Heart left ventricle (tissue), 16 donors: ENCODE measurements at regions of chr11 and their contacts with region 1.

Region 1: GRCh38 chr11:44611687-44612434 is 46.4 kb downstream of the CD82 start:
- DNase-seq: peak in 2 of 5 donors; percentile 40 to 46
- ATAC-seq: peak in 3 of 4 donors; percentile 33 to 65 (median 38)
- H3K4me3 ChIP-seq: no peak overlapping the region
- H3K27ac ChIP-seq: peak overlapping the region in 10 of 12 donors; percentile 12 to 71 (median 37)
- H3K4me1 ChIP-seq: peaks cover 0 to 64% (median 32%) of the 10 kb centered on the region in 12 donors
- H3K27me3 ChIP-seq: no peaks in the 10 kb centered on the region
- CTCF ChIP-seq: no peak
- POLR2A ChIP-seq: no peak

Region 2: GRCh38 chr11:44095506-44096394 is 516.1 kb before region 1 on chr11 and contains the start of gene EXT2:
- intact Hi-C with region 1: loop called in 1 of 10 experiments (anchors 10 kb)
- DNase-seq: peak; percentile 88 to 96 (median 92)
- ATAC-seq: peak; percentile 94 to 98 (median 97)
- H3K4me3 ChIP-seq: peak within 1 kb of the TSS; percentile 70 to 99 (median 90)
- H3K27ac ChIP-seq: peak within 1 kb of the TSS; percentile 62 to 95 (median 84)
- H3K4me1 ChIP-seq: peaks cover 0 to 29% (median 22%) of the 10 kb centered on the region in 12 donors
- H3K27me3 ChIP-seq: no peaks in the 10 kb centered on the region
- CTCF ChIP-seq: peak; percentile 78 to 96 (median 92)
- POLR2A ChIP-seq: peak in 1 of 2 donors; percentile 66
- total RNA-seq, gene EXT2: 24.3 to 41.9 (median 31.9) TPM

Region 3: GRCh38 chr11:44309483-44310205 is 302.2 kb before region 1 on chr11 and contains the start of gene ALX4:
- intact Hi-C with region 1: loop called in 1 of 10 experiments (anchors 10 kb)
- DNase-seq: peak in 3 of 5 donors; percentile 27 to 62 (median 54)
- ATAC-seq: peak; percentile 51 to 74 (median 70)
- H3K4me3 ChIP-seq: peak within 1 kb of the TSS; percentile 29 to 62 (median 46)
- H3K27ac ChIP-seq: no peak within 1 kb of the TSS
- H3K4me1 ChIP-seq: peaks cover 2 to 43% (median 23%) of the 10 kb centered on the region in 12 donors
- H3K27me3 ChIP-seq: peaks cover 55 to 100% (median 97%) of the 10 kb centered on the region in 9 donors
- CTCF ChIP-seq: peak in 2 of 12 donors; percentile 10 to 14
- POLR2A ChIP-seq: no peak
- total RNA-seq, gene ALX4: 0.05 to 0.24 (median 0.11) TPM in 7 of 9 donors, not detected in the others

Region 4: GRCh38 chr11:44556735-44557409 is 55.0 kb before region 1 on chr11:
- intact Hi-C with region 1: loop called (anchors 1 kb)
- DNase-seq: peak in 4 of 5 donors; percentile 57 to 81 (median 66)
- ATAC-seq: peak; percentile 65 to 85 (median 78)
- H3K4me3 ChIP-seq: no peak overlapping the region
- H3K27ac ChIP-seq: peak overlapping the region in 1 of 12 donors; percentile 13
- H3K4me1 ChIP-seq: peaks cover 0 to 28% (median 5%) of the 10 kb centered on the region in 12 donors
- H3K27me3 ChIP-seq: no peaks in the 10 kb centered on the region
- CTCF ChIP-seq: peak; percentile 72 to 95 (median 82)
- POLR2A ChIP-seq: no peak

Region 5: DNA sequence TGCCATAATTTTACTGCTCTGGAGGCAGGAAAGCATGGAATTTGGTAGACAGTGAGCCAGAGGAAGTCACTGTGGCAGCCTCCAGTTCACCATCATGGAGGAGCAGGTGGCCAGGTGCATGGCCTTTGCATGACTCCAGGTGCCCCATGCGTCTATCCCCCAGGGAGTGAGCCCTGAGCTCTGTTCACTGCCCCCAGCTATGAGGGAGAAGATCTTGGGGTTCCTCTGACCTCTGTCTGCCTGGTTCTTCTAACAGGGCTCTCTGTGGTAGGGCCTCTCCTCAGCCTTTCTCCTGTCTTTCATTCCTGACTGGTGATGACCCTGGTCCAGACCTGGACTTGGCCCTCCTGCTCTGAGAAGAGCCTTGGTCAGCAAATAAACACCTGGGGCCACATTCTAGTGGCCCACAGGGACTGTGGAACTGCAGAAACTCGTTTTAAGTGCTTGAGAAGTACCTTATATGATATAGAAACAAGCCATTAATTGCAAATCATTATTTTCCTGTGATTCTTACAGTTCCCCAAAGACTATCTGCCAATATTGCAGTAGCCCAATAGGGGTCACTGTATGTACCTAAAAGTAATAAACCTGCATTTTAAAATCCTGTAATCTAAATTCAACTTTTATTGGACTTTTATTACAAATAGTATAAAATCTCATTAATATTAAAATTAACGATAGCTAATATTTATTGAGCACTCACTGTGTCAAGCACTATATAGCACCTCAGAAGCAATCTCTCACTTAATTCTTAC is 794.2 kb after region 1 on chr11:
- intact Hi-C with region 1: no loop called
- DNase-seq: no peak
- ATAC-seq: no peak
- H3K4me3 ChIP-seq: no peak overlapping the region
- H3K27ac ChIP-seq: no peak overlapping the region
- H3K4me1 ChIP-seq: no peaks in the 10 kb centered on the region
- H3K27me3 ChIP-seq: peaks cover 0 to 17% (median 0%) of the 10 kb centered on the region in 9 donors
- CTCF ChIP-seq: peak; percentile 26 to 63 (median 50)
- POLR2A ChIP-seq: no peak